ENCODE measurements at regions of chr2 and their contacts with region 1.

Region 1: GRCh38 chr2:200703127-200703925 is 108.4 kb upstream of the BZW1 start:
- DNase-seq: peak; percentile 58
- H3K4me3 ChIP-seq: no peak overlapping the region
- H3K27ac ChIP-seq: no peak overlapping the region
- H3K4me1 ChIP-seq: no peaks in the 10 kb centered on the region
- H3K27me3 ChIP-seq: peaks cover 16 to 22% of the 10 kb centered on the region in 2 experiments
- CTCF ChIP-seq: peak; percentile 17 to 21
- POLR2A ChIP-seq: no peak

Region 2: DNA sequence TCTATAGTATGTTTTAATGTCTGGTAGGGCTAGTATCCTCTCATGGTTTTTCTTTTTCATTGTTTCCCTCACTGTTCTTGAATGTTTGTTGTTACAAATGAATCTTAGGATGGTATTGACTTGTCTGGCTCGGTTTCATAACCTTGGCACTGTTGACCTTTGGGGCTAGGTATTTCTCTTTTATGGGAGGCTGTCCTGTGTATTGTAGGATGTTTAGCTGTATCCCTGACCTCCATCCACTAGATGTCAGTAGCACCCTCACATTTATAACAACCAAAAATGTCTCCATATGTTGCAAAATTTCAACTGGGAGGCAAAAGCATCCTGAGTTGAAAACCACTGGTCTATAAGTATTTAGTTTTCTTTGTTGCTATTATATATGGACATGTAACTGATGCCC is 124.5 kb before region 1 on chr2:
- CTCF ChIA-PET with region 1: interaction called, 13 read pairs
- POLR2A ChIA-PET with region 1: no interaction called
- dilution Hi-C with region 1: no loop called
- intact Hi-C with region 1: loop called (anchors 1 kb)
- DNase-seq: peak; percentile 9
- H3K4me3 ChIP-seq: no peak overlapping the region
- H3K27ac ChIP-seq: no peak overlapping the region
- H3K4me1 ChIP-seq: no peaks in the 10 kb centered on the region
- H3K27me3 ChIP-seq: no peaks in the 10 kb centered on the region
- CTCF ChIP-seq: peak; percentile 26 to 28
- POLR2A ChIP-seq: no peak

Region 3: DNA sequence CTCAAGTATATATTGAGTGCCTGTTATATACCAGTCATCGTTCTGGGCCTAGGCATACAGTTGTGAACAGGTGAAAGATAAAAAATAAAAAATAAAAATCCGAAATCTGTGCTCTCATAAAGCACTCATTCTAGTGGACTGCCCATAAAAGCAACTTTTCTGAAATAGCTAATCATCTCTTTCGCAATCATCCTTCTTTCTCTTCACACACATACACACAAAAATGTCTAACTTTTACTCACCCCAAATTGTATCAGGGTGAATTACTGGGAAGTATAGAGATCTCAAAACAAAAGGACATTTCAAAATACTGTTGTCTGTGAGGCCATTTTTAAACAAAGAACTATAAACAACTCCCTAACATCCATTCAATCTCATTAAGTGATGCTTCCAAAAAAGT is 289.8 kb after region 1 on chr2:
- CTCF ChIA-PET with region 1: no interaction called
- POLR2A ChIA-PET with region 1: no interaction called
- dilution Hi-C with region 1: no loop called
- intact Hi-C with region 1: no loop called
- DNase-seq: no peak
- H3K4me3 ChIP-seq: no peak overlapping the region
- H3K27ac ChIP-seq: no peak overlapping the region
- H3K4me1 ChIP-seq: no peaks in the 10 kb centered on the region
- H3K27me3 ChIP-seq: no peaks in the 10 kb centered on the region
- CTCF ChIP-seq: no peak
- POLR2A ChIP-seq: no peak

Region 4: GRCh38 chr2:201194097-201194496 is 490.8 kb after region 1 on chr2:
- CTCF ChIA-PET with region 1: no interaction called
- POLR2A ChIA-PET with region 1: no interaction called
- dilution Hi-C with region 1: no loop called
- intact Hi-C with region 1: no loop called
- DNase-seq: no peak
- H3K4me3 ChIP-seq: no peak overlapping the region
- H3K27ac ChIP-seq: no peak overlapping the region
- H3K4me1 ChIP-seq: peaks cover 35% of the 10 kb centered on the region
- H3K27me3 ChIP-seq: no peaks in the 10 kb centered on the region
- CTCF ChIP-seq: no peak
- POLR2A ChIP-seq: no peak

Measured in endothelial cell of umbilical vein (primary cell).